ENCODE measurements at regions of chr19 and their contacts with region 1.

Region 1: GRCh38 chr19:35352448-35353304 is 5.0 kb downstream of the FFAR1 start:
- DNase-seq: peak; percentile 90
- H3K4me3 ChIP-seq: no peak overlapping the region
- H3K27ac ChIP-seq: peak overlapping the region in 2 of 8 donors; percentile 14 to 59
- H3K4me1 ChIP-seq: peaks cover 10 to 60% (median 29%) of the 10 kb centered on the region in 6 donors
- H3K27me3 ChIP-seq: peaks cover 0 to 17% (median 0%) of the 10 kb centered on the region in 7 donors
- CTCF ChIP-seq: peak; percentile 74 to 97 (median 91)
- POLR2A ChIP-seq: no peak

Region 2: DNA sequence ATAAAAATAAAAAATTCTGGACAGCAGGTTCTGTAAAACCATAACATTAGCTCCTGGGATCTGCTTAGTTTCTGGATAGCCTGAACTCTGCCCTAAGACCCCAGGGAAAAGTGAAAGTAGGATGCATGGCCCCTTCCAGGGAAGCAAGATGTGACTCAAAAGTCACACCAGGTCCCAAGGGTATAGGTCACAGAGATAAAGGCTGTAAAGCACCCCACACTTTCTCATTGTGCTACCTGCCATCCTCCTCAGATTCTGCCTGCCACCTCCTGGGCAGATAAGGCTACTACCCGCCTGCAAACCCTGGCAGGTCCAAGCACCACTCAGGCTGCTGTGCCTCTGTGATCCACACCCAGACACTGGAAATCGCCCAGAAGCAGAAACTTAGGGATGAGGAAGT is 116.0 kb after region 1 on chr19:
- intact Hi-C with region 1: loop called (anchors 2 kb)
- DNase-seq: peak; percentile 90
- H3K4me3 ChIP-seq: no peak overlapping the region
- H3K27ac ChIP-seq: no peak overlapping the region
- H3K4me1 ChIP-seq: peaks cover 1 to 19% (median 12%) of the 10 kb centered on the region in 6 donors
- H3K27me3 ChIP-seq: peaks cover 0 to 6% (median 0%) of the 10 kb centered on the region in 7 donors
- CTCF ChIP-seq: peak; percentile 70 to 94 (median 86)
- POLR2A ChIP-seq: no peak

Region 3: DNA sequence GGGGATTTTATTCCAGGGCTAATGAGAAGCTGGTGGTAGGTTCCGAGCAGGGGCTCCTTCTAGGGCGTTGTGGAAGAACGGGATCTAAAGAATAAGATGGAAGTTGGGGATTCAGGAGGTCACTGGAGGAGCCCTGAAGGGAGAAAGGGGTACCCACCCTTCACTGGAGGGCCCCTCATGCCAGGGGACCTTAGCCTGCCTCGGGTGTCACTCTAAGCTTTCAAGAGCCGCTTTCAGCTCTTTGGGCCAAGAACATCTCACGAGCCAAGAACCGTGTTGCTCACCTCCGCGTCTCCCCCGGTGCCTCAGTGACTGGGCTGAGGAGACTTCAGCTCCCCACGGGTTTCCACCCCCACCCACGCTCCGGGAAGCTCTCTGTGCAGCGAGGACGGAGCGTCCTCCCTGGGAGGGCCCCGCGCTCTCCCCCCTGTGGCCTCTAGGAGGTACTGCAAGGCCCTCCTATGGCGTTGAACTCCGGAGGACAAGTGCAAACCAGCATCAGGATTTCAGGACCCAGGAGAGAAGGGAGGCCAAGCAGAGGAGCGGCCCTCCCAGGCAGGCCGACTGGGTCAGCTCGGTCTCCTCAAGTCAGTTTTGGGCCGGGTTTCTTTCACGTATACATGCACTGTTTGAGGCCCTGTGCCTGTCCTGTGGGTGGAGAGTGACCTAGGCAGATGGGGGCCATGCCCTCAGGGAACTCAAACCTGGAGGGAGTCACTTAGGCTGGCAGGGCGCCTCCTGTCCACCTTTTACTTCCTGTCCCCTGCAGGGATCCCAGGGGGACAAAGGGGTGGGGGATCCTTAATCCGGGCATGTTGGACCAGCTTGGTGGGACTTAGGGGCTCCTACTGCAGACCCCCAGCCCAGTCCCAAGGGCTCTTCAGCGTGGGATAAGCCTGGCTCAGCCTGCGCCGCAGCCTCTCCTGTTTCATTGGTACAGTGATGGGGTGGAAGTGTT is 142.7 kb after region 1 on chr19:
- intact Hi-C with region 1: loop called (anchors 10 kb)
- DNase-seq: peak; percentile 92
- H3K4me3 ChIP-seq: peak overlapping the region in 1 of 8 donors; percentile 42
- H3K27ac ChIP-seq: no peak overlapping the region
- H3K4me1 ChIP-seq: peaks cover 0 to 11% (median 7%) of the 10 kb centered on the region in 6 donors
- H3K27me3 ChIP-seq: peaks cover 0 to 40% (median 0%) of the 10 kb centered on the region in 7 donors
- CTCF ChIP-seq: peak; percentile 94 to 99 (median 98)
- POLR2A ChIP-seq: no peak